Activated T-helper 2 cell treated with anti-CD3 and anti-CD28 coated beads, Interferon-gamma antibody, Interleukin-2, Interleukin-4, amounts not matched to agents 10 μg/mL and 5 μg/mL and 100 μg/mL, durations not matched to agents 14 hours and 24 hours and 36 hours (primary cell): ENCODE measurements at regions of chr22 and their contacts with region 1.

Region 1: DNA sequence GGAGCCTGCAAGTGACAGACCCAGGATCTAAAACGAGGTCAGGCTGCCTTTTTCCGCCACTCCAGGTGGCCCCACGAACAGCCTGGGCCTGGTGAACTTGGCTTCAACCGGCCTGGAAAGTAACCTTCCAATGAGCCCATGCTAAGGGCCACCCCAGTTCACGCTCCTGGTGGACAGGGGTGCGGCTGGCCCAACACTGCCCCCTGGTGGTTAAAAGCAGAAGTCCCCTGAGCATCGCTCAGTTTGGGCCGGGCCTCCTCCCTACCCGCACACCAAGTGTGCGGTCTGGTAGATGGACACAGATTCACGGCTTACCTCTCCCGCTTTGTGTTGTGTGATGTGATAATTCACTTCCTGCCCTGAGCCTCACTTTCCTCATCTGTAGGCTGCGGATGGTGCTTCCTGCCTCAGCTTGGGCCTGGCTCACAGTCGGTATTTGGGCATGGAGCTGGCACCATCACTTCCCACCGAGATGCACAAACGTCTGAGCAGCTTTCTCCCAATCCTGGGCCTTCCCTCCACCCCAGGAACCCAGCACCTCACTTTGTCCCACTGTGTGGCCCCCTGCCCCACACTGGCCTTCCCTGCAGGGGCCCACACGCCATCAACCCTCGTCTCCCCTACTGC is 13.7 kb upstream of the SEC14L3 start:
- DNase-seq: peak; percentile 68
- H3K4me3 Mint-ChIP-seq: no peak overlapping the region
- H3K27ac Mint-ChIP-seq: no peak overlapping the region
- H3K4me1 Mint-ChIP-seq: no peaks in the 10 kb centered on the region
- H3K27me3 Mint-ChIP-seq: no peaks in the 10 kb centered on the region

Region 2: GRCh38 chr22:30386960-30387827 is 98.3 kb before region 1 on chr22 and contains the start of gene RNF215:
- intact Hi-C with region 1: loop called (anchors 1 kb)
- DNase-seq: peak; percentile 76
- H3K4me3 Mint-ChIP-seq: peak within 1 kb of the TSS; percentile 84
- H3K27ac Mint-ChIP-seq: peak within 1 kb of the TSS; percentile 69
- H3K4me1 Mint-ChIP-seq: peaks cover 23% of the 10 kb centered on the region
- H3K27me3 Mint-ChIP-seq: no peaks in the 10 kb centered on the region
- total RNA-seq, gene RNF215: 17.2 and 19.3 TPM in 2 replicates

Region 3: DNA sequence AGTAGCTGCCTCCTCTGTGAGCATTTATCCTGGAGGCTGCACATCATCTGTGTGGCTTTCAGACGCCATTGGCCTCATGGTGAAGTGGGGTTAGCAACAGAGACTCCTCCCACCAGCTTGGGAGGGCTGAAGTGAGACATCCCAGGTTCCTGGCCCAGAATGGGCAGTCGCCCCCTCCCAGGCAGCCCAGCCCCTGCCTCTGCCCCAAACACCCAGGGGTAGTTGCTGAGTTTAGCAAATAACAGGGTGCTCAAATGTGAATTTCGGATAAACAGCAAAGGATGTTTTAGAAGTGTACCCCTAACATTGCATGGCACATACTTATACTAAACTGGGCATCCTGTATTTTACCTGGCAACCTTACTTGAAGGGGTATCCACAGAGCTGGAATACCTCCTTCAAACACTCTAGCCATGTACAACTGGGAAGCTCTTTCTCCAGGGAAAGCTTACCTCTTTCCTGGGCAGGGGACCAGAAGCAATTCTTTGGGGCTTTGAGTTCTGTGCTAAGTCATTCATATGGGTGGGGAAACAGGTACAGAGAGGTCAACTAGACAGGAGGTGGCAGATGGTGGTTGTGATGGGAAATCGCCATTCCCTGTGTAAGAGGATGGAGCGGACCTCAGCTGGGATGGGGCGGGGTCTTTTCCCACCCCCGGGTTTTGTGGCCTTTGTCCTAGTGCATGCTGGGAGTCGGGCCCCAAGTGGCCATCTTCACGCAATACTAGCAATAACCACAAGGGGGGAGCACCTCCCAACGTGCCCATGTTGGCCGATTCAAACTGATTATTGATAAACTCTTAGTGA is 40.6 kb before region 1 on chr22:
- intact Hi-C with region 1: loop called (anchors 1 kb)
- DNase-seq: peak; percentile 47
- H3K4me3 Mint-ChIP-seq: no peak overlapping the region
- H3K27ac Mint-ChIP-seq: no peak overlapping the region
- H3K4me1 Mint-ChIP-seq: peaks cover 26% of the 10 kb centered on the region
- H3K27me3 Mint-ChIP-seq: peaks cover 20% of the 10 kb centered on the region